Dendritic cell treated with granulocyte-macrophage colony-stimulating factor and Interleukin-4, amounts not matched to agents 40 ng/mL and 50 ng/mL, for 4 days (primary cell): ENCODE measurements at regions of chr10 and their contacts with region 1.

Region 1: DNA sequence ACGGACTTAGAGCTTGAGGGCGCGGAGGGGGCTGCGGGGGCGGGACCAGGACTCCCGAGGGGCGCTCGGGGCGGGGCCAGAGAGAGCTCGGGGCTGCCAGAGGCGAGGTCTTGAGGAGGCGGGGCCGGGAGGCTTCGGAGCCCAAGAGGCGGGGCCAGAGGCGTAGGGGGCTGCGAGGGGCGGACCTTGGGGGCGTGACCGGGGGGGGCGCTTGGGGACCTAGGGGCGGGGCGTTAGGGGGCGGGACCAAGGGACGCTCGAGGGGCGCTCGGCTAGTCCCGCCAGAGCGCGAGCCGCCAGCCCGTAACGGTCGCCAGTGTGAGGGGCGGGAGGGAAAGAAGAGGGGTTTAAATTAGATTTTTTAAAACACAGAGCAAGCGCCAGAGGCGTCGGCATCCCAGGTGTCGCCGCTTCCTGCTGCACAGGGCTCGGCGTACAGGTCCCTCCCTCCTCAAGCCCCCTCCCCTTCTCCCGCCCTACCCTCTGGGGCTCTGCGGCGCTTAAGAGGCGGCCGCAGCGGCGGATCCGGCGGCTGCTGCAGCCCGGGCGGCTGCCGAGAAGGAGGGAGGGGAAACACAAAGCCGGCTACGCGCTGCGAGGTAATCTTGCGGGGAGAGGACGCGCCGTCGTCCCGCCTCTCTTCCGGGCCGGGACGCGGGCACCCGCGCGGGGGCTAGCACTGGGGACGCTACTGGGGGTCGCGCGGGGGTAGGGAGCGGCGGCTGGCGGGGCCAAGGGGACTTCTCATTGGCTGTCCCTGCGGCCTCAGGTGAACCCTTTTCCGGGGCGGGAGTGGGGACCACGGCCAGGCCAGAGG is at the start of gene ADD3:
- H3K4me3 Mint-ChIP-seq: peak within 1 kb of the TSS; percentile 97
- H3K27ac Mint-ChIP-seq: no peak within 1 kb of the TSS
- H3K4me1 Mint-ChIP-seq: peaks cover 32% of the 10 kb centered on the region
- H3K27me3 Mint-ChIP-seq: no peaks in the 10 kb centered on the region

Region 2: GRCh38 chr10:109922976-109923921 is 84.7 kb before region 1 on chr10 and contains the start of gene XPNPEP1:
- intact Hi-C with region 1: loop called (anchors 5 kb)
- H3K4me3 Mint-ChIP-seq: peak within 1 kb of the TSS; percentile 86
- H3K27ac Mint-ChIP-seq: peak within 1 kb of the TSS; percentile 89
- H3K4me1 Mint-ChIP-seq: peaks cover 46% of the 10 kb centered on the region
- H3K27me3 Mint-ChIP-seq: no peaks in the 10 kb centered on the region

Region 3: DNA sequence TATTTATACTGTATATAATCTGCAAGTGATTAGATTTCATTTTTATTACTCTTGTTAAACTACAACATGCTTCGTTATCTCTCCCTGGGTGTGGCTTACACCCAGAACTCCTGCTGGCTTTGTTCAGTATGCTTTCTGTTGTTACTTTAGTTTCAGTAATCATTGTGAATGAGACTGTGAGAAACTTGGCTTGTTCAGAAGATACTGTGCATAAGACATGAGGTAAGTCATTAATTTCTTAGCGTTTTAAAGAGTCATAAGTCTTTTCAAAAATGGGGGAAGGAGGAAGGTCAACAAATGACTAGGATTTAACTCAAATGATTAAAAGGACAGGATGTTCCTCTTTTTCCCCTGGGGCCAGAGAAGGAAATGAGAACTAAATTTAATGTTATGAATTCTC is 11.7 kb before region 1 on chr10:
- intact Hi-C with region 1: loop called (anchors 1 kb)
- H3K4me3 Mint-ChIP-seq: no peak overlapping the region
- H3K27ac Mint-ChIP-seq: peak overlapping the region; percentile 77
- H3K4me1 Mint-ChIP-seq: peaks cover 44% of the 10 kb centered on the region
- H3K27me3 Mint-ChIP-seq: no peaks in the 10 kb centered on the region